Activated CD4-positive, alpha-beta T cell treated with anti-CD3 and anti-CD28 coated beads, Interleukin-2, amount 10 ng/mL, durations not matched to agents 24 days and 14 days (primary cell): ENCODE measurements at regions of chr15 and their contacts with region 1.

Region 1: GRCh38 chr15:92831655-92832328 is 68.3 kb upstream of the CHD2 start:
- DNase-seq: peak; percentile 97
- H3K4me3 Mint-ChIP-seq: peak overlapping the region; percentile 76
- H3K27ac Mint-ChIP-seq: peak overlapping the region; percentile 97
- H3K4me1 Mint-ChIP-seq: peaks cover 34% of the 10 kb centered on the region
- H3K27me3 Mint-ChIP-seq: peaks cover 2% of the 10 kb centered on the region

Region 2: DNA sequence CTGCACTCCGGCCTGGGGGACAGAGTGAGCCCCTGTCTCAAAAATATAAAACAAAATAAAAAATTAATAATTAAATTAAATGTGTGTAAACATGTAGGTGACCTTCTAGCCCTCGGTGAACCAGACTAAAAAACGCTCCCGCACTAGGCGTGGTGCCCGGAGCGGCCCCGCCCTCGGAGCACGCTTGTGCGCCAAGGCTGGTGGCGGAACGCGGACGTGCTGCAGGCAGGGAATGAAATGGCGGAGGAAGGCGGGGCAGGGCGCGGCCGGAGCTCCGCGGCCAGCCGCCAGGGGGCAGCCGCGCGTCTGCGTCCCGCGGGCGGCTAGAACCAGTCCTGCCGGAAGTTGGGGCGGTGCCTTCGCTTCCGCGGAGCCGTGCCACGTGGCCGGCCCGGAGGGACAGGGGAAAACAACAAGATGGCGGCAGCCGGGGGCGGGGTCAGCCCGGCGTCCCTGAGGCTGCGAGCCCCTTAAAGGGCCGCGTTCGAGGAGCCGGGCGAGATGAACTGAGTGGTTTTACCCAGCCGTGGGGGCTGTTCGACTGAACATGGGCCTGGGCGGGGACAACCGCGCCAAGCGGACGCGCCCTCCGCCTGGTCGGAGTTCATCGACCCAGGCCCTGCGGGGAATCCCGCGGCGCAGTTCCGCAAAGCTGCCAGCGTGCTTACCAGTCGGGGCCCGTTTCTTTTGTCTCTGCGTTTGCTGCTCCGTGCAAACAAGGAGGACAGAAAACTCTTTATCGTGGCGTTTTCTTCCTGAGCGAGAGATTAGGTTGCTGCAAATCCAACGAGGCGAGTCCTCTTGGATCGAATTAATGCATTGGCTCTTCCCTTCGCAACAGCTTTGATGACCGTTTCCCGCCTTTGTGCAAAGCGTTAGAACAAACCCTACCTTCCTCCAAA is 22.6 kb before region 1 on chr15:
- intact Hi-C with region 1: loop called (anchors 1 kb)
- DNase-seq: peak; percentile 100
- H3K4me3 Mint-ChIP-seq: peak overlapping the region; percentile 89
- H3K27ac Mint-ChIP-seq: peak overlapping the region; percentile 98
- H3K4me1 Mint-ChIP-seq: peaks cover 45% of the 10 kb centered on the region
- H3K27me3 Mint-ChIP-seq: no peaks in the 10 kb centered on the region

Region 3: GRCh38 chr15:92820236-92821021 is 11.4 kb before region 1 on chr15:
- intact Hi-C with region 1: loop called (anchors 1 kb)
- DNase-seq: peak; percentile 97
- H3K4me3 Mint-ChIP-seq: peak overlapping the region; percentile 90
- H3K27ac Mint-ChIP-seq: peak overlapping the region; percentile 96
- H3K4me1 Mint-ChIP-seq: peaks cover 52% of the 10 kb centered on the region
- H3K27me3 Mint-ChIP-seq: no peaks in the 10 kb centered on the region

Region 4: GRCh38 chr15:92843814-92844213 is 12.0 kb after region 1 on chr15:
- intact Hi-C with region 1: loop called (anchors 1 kb)
- DNase-seq: no peak
- H3K4me3 Mint-ChIP-seq: peak overlapping the region; percentile 40
- H3K27ac Mint-ChIP-seq: peak overlapping the region; percentile 77
- H3K4me1 Mint-ChIP-seq: peaks cover 54% of the 10 kb centered on the region
- H3K27me3 Mint-ChIP-seq: no peaks in the 10 kb centered on the region

Region 5: GRCh38 chr15:92848852-92849598 is 17.2 kb after region 1 on chr15:
- intact Hi-C with region 1: loop called (anchors 1 kb)
- DNase-seq: peak; percentile 80
- H3K4me3 Mint-ChIP-seq: peak overlapping the region; percentile 40
- H3K27ac Mint-ChIP-seq: peak overlapping the region; percentile 82
- H3K4me1 Mint-ChIP-seq: peaks cover 46% of the 10 kb centered on the region
- H3K27me3 Mint-ChIP-seq: no peaks in the 10 kb centered on the region

Region 6: GRCh38 chr15:92864127-92864814 is 32.5 kb after region 1 on chr15:
- intact Hi-C with region 1: no loop called
- DNase-seq: no peak
- H3K4me3 Mint-ChIP-seq: no peak overlapping the region
- H3K27ac Mint-ChIP-seq: no peak overlapping the region
- H3K4me1 Mint-ChIP-seq: peaks cover 2% of the 10 kb centered on the region
- H3K27me3 Mint-ChIP-seq: no peaks in the 10 kb centered on the region

Region 7: DNA sequence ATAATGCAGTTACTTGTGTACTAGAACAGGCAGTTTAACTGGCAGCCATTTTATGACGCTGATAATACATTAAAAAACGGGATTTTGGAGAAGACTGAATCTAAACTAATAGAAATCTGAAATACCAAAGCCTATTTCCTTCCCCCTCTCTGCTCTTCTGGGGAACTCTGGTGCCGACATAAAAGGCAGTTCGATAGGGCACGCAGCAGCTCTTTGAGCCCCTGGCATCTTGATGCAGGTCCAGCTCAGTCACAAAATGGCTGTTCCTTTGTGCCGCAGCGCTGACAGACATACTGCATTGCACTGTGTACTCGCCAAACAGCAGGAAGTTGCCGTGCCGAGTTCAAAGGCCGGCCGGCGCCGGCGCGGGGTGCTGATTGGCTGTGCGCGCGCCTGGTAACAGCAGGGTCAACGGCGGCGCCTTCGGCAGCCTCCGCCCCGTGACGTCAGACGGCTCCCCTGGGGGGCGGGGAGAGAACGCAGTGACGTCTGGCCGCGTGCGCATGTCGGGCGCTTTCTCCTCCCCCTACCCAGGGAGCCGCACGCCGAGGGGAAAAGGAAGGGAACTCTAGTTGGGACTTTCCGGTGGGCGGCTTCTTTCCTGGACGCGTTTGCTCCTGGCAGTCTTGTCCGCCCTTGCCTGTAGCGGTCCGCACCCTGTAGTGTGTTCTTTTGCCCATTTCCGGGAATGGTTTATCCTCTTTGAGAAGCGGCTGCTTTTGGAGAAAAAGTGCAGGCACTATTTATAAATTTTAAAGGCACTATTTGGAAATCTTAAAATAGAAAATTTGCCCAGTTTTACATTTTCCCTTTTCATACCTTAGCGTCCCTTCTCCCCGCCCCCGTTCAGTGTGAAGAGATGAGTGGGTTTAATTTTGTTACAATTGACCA is 72.4 kb after region 1 on chr15:
- intact Hi-C with region 1: loop called (anchors 1 kb)
- DNase-seq: peak; percentile 100
- H3K4me3 Mint-ChIP-seq: peak overlapping the region; percentile 89
- H3K27ac Mint-ChIP-seq: peak overlapping the region; percentile 100
- H3K4me1 Mint-ChIP-seq: peaks cover 56% of the 10 kb centered on the region
- H3K27me3 Mint-ChIP-seq: no peaks in the 10 kb centered on the region